Activated CD8-positive, alpha-beta T cell treated with anti-CD3 and anti-CD28 coated beads for 36 hours (primary cell): ENCODE measurements at regions of chr15 and their contacts with region 1.

Region 1: DNA sequence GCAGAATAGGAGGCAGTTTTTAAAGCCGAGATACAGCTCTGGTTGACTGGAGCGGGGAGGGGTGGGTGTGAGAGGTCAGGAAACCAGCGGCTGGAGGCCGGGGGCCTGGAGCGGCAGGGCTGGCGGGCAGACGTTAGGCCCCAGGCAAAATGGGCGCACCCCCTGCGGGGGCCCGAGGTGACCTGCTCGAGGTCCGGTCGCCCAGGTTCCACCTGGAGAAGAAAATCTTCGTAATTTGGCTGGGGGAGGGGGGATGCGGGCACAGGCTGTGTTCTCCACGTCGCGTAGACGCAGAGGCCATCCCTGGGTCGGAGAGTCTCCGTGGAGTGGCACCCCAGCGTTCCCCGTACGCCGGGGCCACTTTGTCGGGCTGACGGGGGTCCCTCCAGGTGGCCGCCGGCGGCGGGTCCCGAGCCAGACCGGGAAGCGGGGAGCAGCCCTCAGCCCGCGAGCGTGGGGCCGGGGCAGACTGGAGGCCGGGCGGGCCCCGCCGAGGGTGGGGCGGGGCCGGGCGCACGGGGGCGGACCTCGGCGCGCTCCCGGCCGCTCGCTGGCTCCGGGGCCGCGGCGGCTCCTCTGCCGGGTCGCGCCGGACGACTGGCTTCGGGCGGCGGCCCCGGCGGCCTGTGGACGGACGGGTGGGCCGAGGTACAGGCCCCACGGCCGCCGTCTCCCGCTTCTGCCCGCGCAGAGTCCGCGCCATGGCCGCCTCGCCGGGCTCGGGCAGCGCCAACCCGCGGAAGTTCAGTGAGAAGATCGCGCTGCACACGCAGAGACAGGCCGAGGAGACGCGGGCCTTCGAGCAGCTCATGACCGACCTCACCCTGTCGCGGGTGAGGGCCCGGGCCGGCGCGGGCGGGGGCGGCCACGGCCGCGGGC is at the start of gene CRTC3:
- DNase-seq: peak; percentile 58
- ATAC-seq: peak; percentile 85
- H3K4me3 Mint-ChIP-seq: peak within 1 kb of the TSS; percentile 99
- H3K27ac Mint-ChIP-seq: peak within 1 kb of the TSS; percentile 94
- H3K4me1 Mint-ChIP-seq: peaks cover 42% of the 10 kb centered on the region
- H3K27me3 Mint-ChIP-seq: no peaks in the 10 kb centered on the region
- CTCF ChIP-seq: no peak
- total RNA-seq, gene CRTC3: 27.1 to 28.7 TPM

Region 2: GRCh38 chr15:90539789-90540188 is 10.2 kb after region 1 on chr15:
- CTCF ChIA-PET with region 1: interaction called, 11 read pairs
- POLR2A ChIA-PET with region 1: interaction called, 7 read pairs
- intact Hi-C with region 1: no loop called
- DNase-seq: peak; percentile 43
- ATAC-seq: peak; percentile 80
- H3K4me3 Mint-ChIP-seq: peak overlapping the region; percentile 77
- H3K27ac Mint-ChIP-seq: peak overlapping the region; percentile 94
- H3K4me1 Mint-ChIP-seq: peaks cover 63% of the 10 kb centered on the region
- H3K27me3 Mint-ChIP-seq: no peaks in the 10 kb centered on the region
- CTCF ChIP-seq: no peak

Region 3: GRCh38 chr15:90565866-90566265 is 36.3 kb after region 1 on chr15:
- CTCF ChIA-PET with region 1: interaction called, 4 read pairs
- POLR2A ChIA-PET with region 1: interaction called, 6 read pairs
- intact Hi-C with region 1: loop called (anchors 5 kb)
- DNase-seq: no peak
- ATAC-seq: no peak
- H3K4me3 Mint-ChIP-seq: no peak overlapping the region
- H3K27ac Mint-ChIP-seq: peak overlapping the region; percentile 89
- H3K4me1 Mint-ChIP-seq: peaks cover 84% of the 10 kb centered on the region
- H3K27me3 Mint-ChIP-seq: no peaks in the 10 kb centered on the region
- CTCF ChIP-seq: no peak